ENCODE measurements at regions of chr5 and their contacts with region 1.

Region 1: GRCh38 chr5:131528682-131529081 is 106.3 kb downstream of the RAPGEF6 start:
- DNase-seq: no peak
- ATAC-seq: no peak
- H3K4me3 ChIP-seq: peak overlapping the region; percentile 18
- H3K4me3 Mint-ChIP-seq: peak overlapping the region; percentile 16 to 85 (median 67)
- H3K27ac ChIP-seq: peak overlapping the region; percentile 11
- H3K27ac Mint-ChIP-seq: peak overlapping the region; percentile 53 to 91 (median 81)
- H3K4me1 ChIP-seq: peaks cover 35 to 77% of the 10 kb centered on the region in 2 donors
- H3K4me1 Mint-ChIP-seq: peaks cover 49 to 91% (median 79%) of the 10 kb centered on the region in 7 donors
- H3K27me3 ChIP-seq: no peaks in the 10 kb centered on the region
- H3K27me3 Mint-ChIP-seq: no peaks in the 10 kb centered on the region

Region 2: DNA sequence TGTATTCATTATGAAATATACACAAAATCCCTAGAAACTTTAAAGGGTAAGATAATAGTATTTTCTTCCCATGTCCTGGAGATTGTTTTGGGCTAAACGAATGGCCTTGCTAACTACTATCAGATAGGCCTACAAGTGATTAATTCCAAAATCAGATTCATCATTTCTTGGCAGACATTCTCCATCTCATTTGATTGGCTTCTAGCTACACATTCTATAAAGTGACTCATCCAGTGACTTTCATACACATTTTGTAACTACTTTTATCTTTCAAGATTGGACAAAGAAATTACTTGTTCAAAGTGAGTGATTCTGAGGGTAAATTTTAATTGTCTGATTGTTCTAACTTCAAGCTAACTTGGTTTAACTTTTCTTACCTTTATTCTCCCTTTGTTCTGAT is 13.1 kb after region 1 on chr5:
- CTCF ChIA-PET with region 1: interaction called, 6 read pairs
- POLR2A ChIA-PET with region 1: interaction called, 144 read pairs
- intact Hi-C with region 1: loop called in 1 of 2 experiments (anchors 1 kb)
- DNase-seq: no peak
- ATAC-seq: no peak
- H3K4me3 ChIP-seq: no peak overlapping the region
- H3K4me3 Mint-ChIP-seq: peak overlapping the region in 6 of 10 donors; percentile 5 to 98 (median 56)
- H3K27ac ChIP-seq: peak overlapping the region; percentile 49
- H3K27ac Mint-ChIP-seq: peak overlapping the region in 7 of 9 donors; percentile 3 to 86 (median 66)
- H3K4me1 ChIP-seq: peaks cover 4 to 63% of the 10 kb centered on the region in 2 donors
- H3K4me1 Mint-ChIP-seq: peaks cover 47 to 87% (median 82%) of the 10 kb centered on the region in 7 donors
- H3K27me3 ChIP-seq: no peaks in the 10 kb centered on the region
- H3K27me3 Mint-ChIP-seq: no peaks in the 10 kb centered on the region

Region 3: DNA sequence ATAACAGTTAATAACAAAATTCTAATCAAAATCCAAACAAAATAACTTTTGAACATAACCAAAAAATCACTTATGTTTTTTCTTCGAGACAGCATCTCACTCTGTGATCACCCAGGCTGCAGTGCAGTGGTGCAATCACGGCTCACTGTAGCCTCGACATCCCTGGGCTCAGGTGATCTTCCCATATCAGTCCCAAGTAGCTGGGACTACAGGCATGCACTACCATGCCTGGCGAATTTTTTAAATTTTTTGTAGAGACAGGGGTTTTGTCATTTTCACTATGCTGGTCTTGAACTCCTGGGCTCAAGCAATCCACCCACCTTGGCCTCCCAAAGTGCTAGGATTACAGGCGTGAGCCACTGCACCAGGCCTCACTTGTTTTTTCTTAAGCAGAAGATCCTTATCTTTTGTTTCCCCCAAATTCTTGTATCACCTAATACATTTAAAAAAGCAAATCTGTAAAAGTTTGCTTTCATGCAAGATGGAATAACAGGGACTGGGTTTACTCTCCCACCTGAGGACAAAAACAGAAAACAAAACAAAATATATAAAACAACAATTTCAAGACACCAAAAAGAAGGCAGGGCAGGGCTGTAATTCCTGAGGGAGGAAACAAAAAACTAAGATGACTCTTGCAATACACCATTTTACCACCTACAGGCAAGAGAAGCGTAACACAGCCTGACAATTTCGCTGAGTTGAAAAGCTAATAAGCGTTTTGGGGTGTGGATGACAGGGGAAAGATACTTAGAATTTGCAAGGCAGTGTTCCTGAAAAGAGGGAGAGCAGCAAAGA is 34.9 kb after region 1 on chr5:
- CTCF ChIA-PET with region 1: interaction called, 3 read pairs
- POLR2A ChIA-PET with region 1: interaction called, 3 read pairs
- intact Hi-C with region 1: loop called (anchors 2 to 5 kb)
- DNase-seq: peak in 1 of 9 donors; percentile 10
- ATAC-seq: no peak
- H3K4me3 ChIP-seq: no peak overlapping the region
- H3K4me3 Mint-ChIP-seq: peak overlapping the region in 5 of 10 donors; percentile 1 to 33 (median 19)
- H3K27ac ChIP-seq: no peak overlapping the region
- H3K27ac Mint-ChIP-seq: peak overlapping the region in 7 of 9 donors; percentile 10 to 77 (median 57)
- H3K4me1 ChIP-seq: peaks cover 0 to 11% of the 10 kb centered on the region in 2 donors
- H3K4me1 Mint-ChIP-seq: peaks cover 18 to 74% (median 60%) of the 10 kb centered on the region in 7 donors
- H3K27me3 ChIP-seq: no peaks in the 10 kb centered on the region
- H3K27me3 Mint-ChIP-seq: no peaks in the 10 kb centered on the region

Region 4: GRCh38 chr5:131679913-131680312 is 151.2 kb after region 1 on chr5:
- CTCF ChIA-PET with region 1: no interaction called
- POLR2A ChIA-PET with region 1: no interaction called
- intact Hi-C with region 1: no loop called
- DNase-seq: no peak
- ATAC-seq: peak; percentile 29
- H3K4me3 ChIP-seq: no peak overlapping the region
- H3K4me3 Mint-ChIP-seq: no peak overlapping the region
- H3K27ac ChIP-seq: no peak overlapping the region
- H3K27ac Mint-ChIP-seq: no peak overlapping the region
- H3K4me1 ChIP-seq: no peaks in the 10 kb centered on the region
- H3K4me1 Mint-ChIP-seq: peaks cover 0 to 12% (median 2%) of the 10 kb centered on the region in 7 donors
- H3K27me3 ChIP-seq: no peaks in the 10 kb centered on the region
- H3K27me3 Mint-ChIP-seq: no peaks in the 10 kb centered on the region

Measured in naive thymus-derived CD4-positive, alpha-beta T cell (primary cell).